GM18951 (cell line): ENCODE measurements at regions of chr18 and their contacts with region 1.

Region 1: GRCh38 chr18:12726774-12727550 is 24.1 kb downstream of the PSMG2 start:
- POLR2A ChIP-seq: no peak

Region 2: GRCh38 chr18:12934454-12935071 is 207.6 kb after region 1 on chr18:
- in situ Hi-C with region 1: no loop called
- POLR2A ChIP-seq: no peak

Region 3: DNA sequence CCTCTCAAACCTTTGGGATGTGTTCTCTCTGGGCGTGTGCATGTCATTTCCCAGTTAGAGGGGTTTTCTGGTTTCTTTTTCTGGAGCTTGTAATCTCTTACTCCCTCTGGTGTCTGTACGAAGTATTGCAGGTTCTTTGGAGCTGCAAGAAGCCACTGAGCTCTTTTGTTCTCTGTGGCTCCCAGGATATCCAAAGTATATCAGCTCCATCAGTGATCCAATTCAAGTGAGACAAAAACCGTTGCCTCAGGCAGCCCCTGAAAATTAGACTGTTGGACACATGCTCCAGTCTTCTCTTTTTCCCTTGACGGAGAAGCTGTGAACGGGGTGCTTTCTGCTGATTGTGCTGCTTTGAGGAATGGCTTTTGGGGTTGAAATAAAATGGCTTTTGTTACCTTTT is 432.6 kb after region 1 on chr18:
- in situ Hi-C with region 1: loop called (anchors 25 kb)
- POLR2A ChIP-seq: no peak